Activated T-helper 2 cell treated with anti-CD3 and anti-CD28 coated beads, Interferon-gamma antibody, Interleukin-2, Interleukin-4, amounts not matched to agents 10 μg/mL and 5 μg/mL and 100 μg/mL, durations not matched to agents 14 hours and 24 hours and 36 hours (primary cell): ENCODE measurements at regions of chr6 and their contacts with region 1.

Region 1: DNA sequence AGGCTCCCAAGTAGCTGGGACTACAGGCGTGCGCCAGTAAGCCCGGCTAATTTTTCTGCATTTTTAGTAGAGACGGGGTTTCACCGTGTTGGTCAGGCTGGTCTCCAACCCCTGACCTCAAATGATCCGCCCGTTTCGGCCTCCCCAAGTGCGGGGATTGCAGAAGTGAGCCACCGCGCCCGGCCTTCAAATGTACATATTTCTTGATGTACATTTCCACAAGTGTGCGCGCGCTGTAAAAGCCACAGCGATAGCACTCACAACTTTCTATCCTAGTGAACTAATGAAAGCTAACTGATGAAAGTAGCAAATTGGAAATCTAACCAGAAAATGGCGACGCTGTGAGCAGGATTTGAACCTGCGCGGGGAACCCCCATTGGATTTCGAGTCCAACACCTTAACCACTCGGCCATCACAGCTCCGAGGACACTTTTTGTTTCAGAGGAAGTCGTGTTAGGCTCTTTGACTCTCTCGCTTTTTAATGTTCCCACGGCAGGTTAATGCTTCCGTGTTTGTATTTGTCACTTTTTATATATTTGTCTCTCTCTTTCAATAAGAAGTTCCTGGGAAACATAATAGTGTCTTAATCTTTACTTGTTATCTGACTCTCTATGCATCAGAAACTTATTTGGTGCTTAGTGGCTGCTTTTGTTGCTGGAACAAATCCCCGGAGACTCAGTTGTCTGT is 199.4 kb upstream of the ZNF184 start:
- DNase-seq: peak; percentile 52
- H3K4me3 Mint-ChIP-seq: peak overlapping the region; percentile 62
- H3K27ac Mint-ChIP-seq: no peak overlapping the region
- H3K4me1 Mint-ChIP-seq: peaks cover 43% of the 10 kb centered on the region
- H3K27me3 Mint-ChIP-seq: peaks cover 57% of the 10 kb centered on the region

Region 2: GRCh38 chr6:27237089-27237803 is 435.0 kb before region 1 on chr6:
- intact Hi-C with region 1: loop called (anchors 5 kb)
- DNase-seq: peak; percentile 34
- H3K4me3 Mint-ChIP-seq: peak overlapping the region; percentile 70
- H3K27ac Mint-ChIP-seq: no peak overlapping the region
- H3K4me1 Mint-ChIP-seq: peaks cover 27% of the 10 kb centered on the region
- H3K27me3 Mint-ChIP-seq: peaks cover 60% of the 10 kb centered on the region

Region 3: DNA sequence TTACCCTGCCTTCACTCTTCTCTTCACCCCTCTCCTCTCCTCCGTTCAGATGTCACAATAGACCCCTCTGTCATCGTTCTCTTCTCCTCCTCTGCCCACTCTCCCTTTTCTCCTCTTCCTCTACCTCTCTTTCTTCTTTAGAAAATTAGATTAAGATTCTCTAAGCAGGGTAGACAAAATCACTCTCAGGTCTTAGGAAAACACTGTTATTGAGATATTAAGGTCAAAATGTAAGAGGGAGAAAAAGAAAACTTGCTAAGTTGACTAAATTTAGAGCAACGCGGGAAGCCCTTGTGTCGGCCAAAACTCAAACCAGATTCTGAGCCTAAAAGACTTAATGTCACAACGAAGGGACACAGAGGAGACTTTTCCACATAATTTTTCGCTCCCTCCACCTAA is 177.3 kb before region 1 on chr6:
- intact Hi-C with region 1: no loop called
- DNase-seq: no peak
- H3K4me3 Mint-ChIP-seq: peak overlapping the region; percentile 83
- H3K27ac Mint-ChIP-seq: no peak overlapping the region
- H3K4me1 Mint-ChIP-seq: peaks cover 10% of the 10 kb centered on the region
- H3K27me3 Mint-ChIP-seq: peaks cover 56% of the 10 kb centered on the region

Region 4: DNA sequence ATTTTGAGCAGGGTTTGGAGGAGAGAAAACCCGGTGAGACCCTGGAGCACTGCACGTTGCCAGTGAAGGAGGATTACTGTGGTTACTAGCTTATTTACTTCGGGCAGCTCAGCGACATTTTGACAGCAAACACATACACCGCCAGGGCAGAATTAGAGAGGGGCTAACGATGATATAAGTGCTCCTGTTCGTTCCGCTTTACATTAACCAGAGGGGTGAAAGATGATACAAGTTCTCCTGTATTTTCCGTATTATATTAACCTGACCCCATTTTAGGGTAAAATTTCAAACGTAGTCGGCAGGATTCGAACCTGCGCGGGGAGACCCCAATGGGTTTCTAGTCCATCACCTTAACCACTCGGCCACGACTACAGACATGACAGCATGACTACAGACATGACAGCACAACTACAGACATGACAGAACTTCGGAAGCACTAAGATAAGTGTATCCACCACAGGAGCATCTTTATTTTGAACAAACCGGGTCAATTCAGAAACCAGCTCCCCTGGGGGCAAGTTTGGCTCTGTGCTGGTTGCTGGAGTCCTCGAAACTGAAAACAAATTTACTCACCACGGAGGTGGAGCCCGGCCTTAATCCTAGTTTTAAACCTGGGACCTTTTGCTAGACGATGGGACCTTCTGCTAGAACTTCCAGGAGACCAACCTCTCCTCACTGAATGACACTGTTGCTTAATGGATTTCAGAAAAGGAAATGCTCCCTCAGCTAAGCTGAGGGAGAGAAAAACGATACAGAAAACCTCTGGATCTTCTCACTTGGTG is 118.9 kb before region 1 on chr6:
- intact Hi-C with region 1: loop called (anchors 5 kb)
- DNase-seq: peak; percentile 24
- H3K4me3 Mint-ChIP-seq: peak overlapping the region; percentile 60
- H3K27ac Mint-ChIP-seq: peak overlapping the region; percentile 38
- H3K4me1 Mint-ChIP-seq: peaks cover 16% of the 10 kb centered on the region
- H3K27me3 Mint-ChIP-seq: peaks cover 68% of the 10 kb centered on the region

Region 5: GRCh38 chr6:28789553-28790083 is 1117.4 kb after region 1 on chr6:
- intact Hi-C with region 1: loop called (anchors 10 kb)
- DNase-seq: no peak
- H3K4me3 Mint-ChIP-seq: peak overlapping the region; percentile 70
- H3K27ac Mint-ChIP-seq: peak overlapping the region; percentile 35
- H3K4me1 Mint-ChIP-seq: peaks cover 19% of the 10 kb centered on the region
- H3K27me3 Mint-ChIP-seq: peaks cover 83% of the 10 kb centered on the region